ENCODE measurements at regions of chr16 and their contacts with region 1.

Region 1: GRCh38 chr16:71412270-71413160 is 29.3 kb downstream of the TLE7 start:
- DNase-seq: peak; percentile 39
- ATAC-seq: peak; percentile 74

Region 2: GRCh38 chr16:71439523-71439922 is 27.0 kb after region 1 on chr16:
- intact Hi-C with region 1: no loop called
- DNase-seq: no peak
- ATAC-seq: no peak

Region 3: GRCh38 chr16:71499775-71500364 is 87.4 kb after region 1 on chr16:
- intact Hi-C with region 1: loop called (anchors 5 kb)
- DNase-seq: no peak
- ATAC-seq: no peak

Measured in left ventricle myocardium superior (tissue), 1 donor.